Activated CD8-positive, alpha-beta T cell treated with anti-CD3 and anti-CD28 coated beads for 36 hours (primary cell): ENCODE measurements at regions of chr6 and their contacts with region 1.

Region 1: GRCh38 chr6:90328004-90328403 is 31.4 kb upstream of the BACH2 start:
- DNase-seq: no peak
- ATAC-seq: no peak
- H3K4me3 Mint-ChIP-seq: no peak overlapping the region
- H3K27ac Mint-ChIP-seq: no peak overlapping the region
- H3K4me1 Mint-ChIP-seq: peaks cover 25% of the 10 kb centered on the region
- H3K27me3 Mint-ChIP-seq: no peaks in the 10 kb centered on the region
- CTCF ChIP-seq: no peak

Region 2: GRCh38 chr6:90216072-90216977 is 111.7 kb before region 1 on chr6:
- CTCF ChIA-PET with region 1: no interaction called
- POLR2A ChIA-PET with region 1: no interaction called
- intact Hi-C with region 1: no loop called
- DNase-seq: peak; percentile 70
- ATAC-seq: peak; percentile 48
- H3K4me3 Mint-ChIP-seq: peak overlapping the region; percentile 69
- H3K27ac Mint-ChIP-seq: no peak overlapping the region
- H3K4me1 Mint-ChIP-seq: peaks cover 28% of the 10 kb centered on the region
- H3K27me3 Mint-ChIP-seq: no peaks in the 10 kb centered on the region
- CTCF ChIP-seq: no peak

Region 3: DNA sequence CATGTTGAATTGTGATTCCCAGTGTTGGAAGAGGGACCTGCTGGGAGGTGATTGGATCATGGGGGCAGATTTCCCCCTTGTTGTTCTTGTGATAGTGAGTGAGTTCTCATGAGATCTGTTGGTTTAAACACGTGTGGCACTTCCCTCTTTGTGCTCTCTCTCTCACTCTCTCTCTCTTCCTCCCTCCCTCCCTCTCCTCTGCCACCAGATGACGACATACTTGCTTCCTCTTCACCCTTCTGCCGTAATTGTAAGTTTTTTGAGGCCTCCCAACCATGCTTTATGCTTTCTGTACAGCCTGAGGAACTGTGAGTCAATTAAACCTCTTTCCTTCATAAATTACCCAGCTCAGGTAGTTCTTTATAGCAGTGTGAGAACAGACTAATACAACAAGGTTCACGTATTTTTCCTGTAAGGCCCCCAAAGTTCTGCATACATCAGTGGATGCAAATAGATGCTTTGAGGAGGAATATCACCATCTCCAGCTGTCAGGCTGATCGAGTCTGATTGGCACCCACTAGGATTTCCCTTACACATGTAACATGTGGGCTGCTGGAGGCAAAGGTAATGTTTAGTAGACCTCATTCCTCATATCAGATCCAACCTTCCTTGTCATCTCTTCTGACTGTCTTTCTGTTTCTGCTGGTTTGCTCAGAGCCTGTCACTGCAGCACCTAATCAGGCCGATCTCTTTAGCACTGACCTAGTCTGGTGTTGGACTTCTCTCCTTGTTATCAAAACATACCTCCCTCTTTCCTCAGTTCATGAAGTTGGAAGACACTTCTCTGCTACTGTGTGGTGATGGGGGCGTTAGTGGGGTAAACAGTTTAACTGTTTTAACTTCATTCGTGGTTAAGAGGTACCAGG is 22.9 kb after region 1 on chr6:
- CTCF ChIA-PET with region 1: interaction called, 16 read pairs
- POLR2A ChIA-PET with region 1: interaction called, 5 read pairs
- intact Hi-C with region 1: no loop called
- DNase-seq: peak; percentile 63
- ATAC-seq: peak; percentile 74
- H3K4me3 Mint-ChIP-seq: peak overlapping the region; percentile 59
- H3K27ac Mint-ChIP-seq: peak overlapping the region; percentile 93
- H3K4me1 Mint-ChIP-seq: peaks cover 49% of the 10 kb centered on the region
- H3K27me3 Mint-ChIP-seq: no peaks in the 10 kb centered on the region
- CTCF ChIP-seq: no peak